Kidney (tissue), 22 donors: ENCODE measurements at regions of chr2 and their contacts with region 1.

Region 1: GRCh38 chr2:66691031-66691507 is 256.1 kb downstream of the MEIS1 start:
- DNase-seq: peak in 2 of 5 donors; percentile 85
- H3K4me3 ChIP-seq: peak overlapping the region in 2 of 3 donors; percentile 40 to 67
- H3K27ac ChIP-seq: peak overlapping the region; percentile 13 to 41
- H3K4me1 ChIP-seq: peaks cover 0 to 3% (median 0%) of the 10 kb centered on the region in 3 donors
- H3K27me3 ChIP-seq: no peaks in the 10 kb centered on the region
- CTCF ChIP-seq: no peak

Region 2: DNA sequence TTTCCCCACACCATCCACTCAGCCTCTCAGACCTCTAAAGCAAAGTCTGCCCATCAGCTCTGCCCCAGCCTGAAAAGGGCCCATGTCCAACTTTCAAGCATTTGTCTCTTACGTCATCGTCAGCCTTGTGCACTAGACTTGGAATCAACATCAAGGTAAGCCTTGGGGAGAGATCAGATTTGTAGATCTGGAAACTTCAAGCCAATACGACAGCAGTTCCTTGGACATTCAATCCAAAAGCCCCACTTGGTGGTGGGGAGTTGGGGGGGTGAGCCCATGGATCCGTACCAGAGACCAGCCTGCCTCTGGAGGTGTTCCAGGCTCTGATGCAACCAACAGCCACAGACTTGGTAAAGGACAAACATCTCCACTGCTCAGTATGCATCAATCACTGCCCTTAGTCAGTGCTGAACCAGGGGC is 462.9 kb before region 1 on chr2:
- intact Hi-C with region 1: no loop called
- DNase-seq: no peak
- H3K4me3 ChIP-seq: no peak overlapping the region
- H3K27ac ChIP-seq: no peak overlapping the region
- H3K4me1 ChIP-seq: no peaks in the 10 kb centered on the region
- H3K27me3 ChIP-seq: no peaks in the 10 kb centered on the region
- CTCF ChIP-seq: no peak

Region 3: DNA sequence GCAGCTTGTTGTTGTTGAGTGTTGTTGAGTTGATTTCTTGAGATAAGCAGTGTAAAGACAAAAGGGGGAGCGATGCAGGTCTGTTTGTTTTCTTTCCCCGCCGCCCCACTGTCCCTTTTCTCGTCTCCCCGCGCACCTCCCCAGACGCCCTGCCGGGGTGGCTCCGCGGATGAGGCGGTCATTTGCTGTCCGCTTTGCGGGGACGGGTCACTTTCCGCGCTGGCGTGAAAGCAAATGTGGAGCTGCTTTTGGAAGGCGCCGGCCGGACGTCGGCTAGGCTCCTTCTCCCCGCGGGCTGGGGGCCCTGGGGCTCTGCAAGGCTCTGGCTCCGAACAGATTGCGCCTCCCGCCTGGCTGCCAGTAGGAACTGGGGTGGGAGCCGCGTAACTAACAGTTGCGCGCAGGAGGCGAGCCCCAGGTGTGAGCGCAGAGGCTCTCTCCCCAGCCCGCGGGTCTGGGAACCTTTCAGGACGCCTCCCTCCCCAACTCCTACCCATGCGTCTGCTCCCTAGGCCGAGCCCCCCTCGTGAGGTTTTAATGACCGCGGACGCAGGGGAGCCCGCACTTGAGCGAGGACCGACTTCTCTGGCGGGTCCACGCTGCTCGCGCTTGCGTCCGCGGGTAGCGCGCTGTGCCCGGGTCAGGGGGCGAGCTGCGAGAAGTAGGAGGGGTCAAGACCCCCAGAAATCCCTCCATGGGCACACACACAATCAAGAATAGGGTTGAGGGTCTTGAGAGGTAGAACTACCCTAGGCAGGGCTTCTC is 109.5 kb before region 1 on chr2:
- intact Hi-C with region 1: loop called (anchors 5 kb)
- DNase-seq: peak; percentile 63 to 84 (median 78)
- H3K4me3 ChIP-seq: peak overlapping the region in 2 of 3 donors; percentile 20 to 64
- H3K27ac ChIP-seq: peak overlapping the region; percentile 88 to 93
- H3K4me1 ChIP-seq: peaks cover 0 to 3% (median 2%) of the 10 kb centered on the region in 3 donors
- H3K27me3 ChIP-seq: peaks cover 30% of the 10 kb centered on the region
- CTCF ChIP-seq: no peak